Activated CD8-positive, alpha-beta T cell treated with anti-CD3 and anti-CD28 coated beads for 36 hours (primary cell): ENCODE measurements at regions of chr17 and their contacts with region 1.

Region 1: DNA sequence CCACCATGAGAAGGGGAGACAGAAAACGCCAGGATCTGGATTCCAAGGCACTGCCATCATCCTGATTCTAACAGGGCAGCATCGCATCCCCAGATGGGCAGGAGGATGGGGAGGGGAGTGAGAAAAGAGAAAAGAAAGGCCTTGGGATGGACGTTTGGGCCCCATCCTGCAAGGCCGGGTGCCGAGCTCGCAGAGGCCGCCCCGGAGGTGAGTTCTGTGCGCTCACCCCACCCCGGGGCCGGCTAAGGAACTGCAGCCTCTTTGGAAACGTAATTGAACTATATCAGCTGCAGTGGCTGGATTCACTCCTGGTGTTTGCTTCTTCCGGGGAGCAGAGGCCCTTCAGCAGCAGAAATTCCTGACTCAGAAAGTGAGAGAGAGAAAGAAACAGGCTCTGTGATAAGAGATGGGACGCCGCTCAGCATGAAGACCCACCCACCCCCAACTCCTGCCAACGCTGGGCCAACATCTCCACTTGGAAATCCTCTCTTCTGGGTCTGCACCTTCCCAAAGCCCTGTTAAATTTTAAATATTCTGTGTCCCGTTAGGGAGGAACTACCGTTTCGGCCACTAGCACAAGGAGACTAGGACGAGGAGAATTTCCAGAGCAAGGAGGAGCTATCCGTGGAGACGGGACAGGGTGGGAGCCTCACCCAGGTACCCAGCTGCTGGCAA is 8.5 kb upstream of the SSTR2 start:
- DNase-seq: peak; percentile 75
- ATAC-seq: peak; percentile 94
- H3K4me3 Mint-ChIP-seq: no peak overlapping the region
- H3K27ac Mint-ChIP-seq: no peak overlapping the region
- H3K4me1 Mint-ChIP-seq: peaks cover 8% of the 10 kb centered on the region
- H3K27me3 Mint-ChIP-seq: peaks cover 11% of the 10 kb centered on the region
- CTCF ChIP-seq: peak; percentile 77

Region 2: DNA sequence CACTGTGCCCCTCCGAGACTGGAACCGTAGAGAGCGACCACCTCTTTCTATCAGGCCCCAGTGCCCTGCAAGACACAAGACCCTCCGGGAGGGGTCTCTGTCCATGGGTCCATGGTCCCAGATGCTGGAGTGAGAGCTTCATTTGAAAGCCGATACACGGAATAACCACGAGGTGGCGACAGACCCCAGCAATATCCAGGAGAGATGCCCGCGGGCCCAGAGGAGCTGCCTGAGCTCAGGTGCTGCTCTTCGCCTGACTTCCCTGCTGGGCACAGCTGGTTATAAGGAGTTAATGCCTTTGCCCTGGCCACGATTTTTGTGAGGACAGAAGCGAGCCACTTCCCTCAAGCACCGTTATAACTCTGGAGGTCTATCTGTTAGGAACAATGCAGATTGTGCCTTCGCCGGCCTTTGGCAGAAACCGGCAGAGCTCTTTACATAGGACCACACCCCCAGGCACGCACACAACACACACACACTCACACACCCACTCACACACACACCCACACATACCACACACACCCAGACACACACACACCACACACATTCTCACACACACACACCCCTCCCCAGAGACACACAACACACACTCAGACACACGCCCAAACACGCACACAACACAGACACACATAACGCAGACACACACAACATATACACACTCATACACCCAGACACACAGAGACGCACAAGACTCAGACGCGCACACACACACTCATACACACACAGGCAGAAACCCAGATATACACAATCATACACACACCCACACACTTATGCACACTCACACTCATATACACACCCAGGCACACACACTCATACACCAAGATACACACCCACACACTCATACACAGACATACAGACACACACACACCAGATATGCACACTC is 599.1 kb before region 1 on chr17:
- CTCF ChIA-PET with region 1: interaction called, 22 read pairs
- POLR2A ChIA-PET with region 1: no interaction called
- intact Hi-C with region 1: loop called (anchors 10 kb)
- DNase-seq: peak; percentile 78
- ATAC-seq: peak; percentile 73
- H3K4me3 Mint-ChIP-seq: no peak overlapping the region
- H3K27ac Mint-ChIP-seq: no peak overlapping the region
- H3K4me1 Mint-ChIP-seq: no peaks in the 10 kb centered on the region
- H3K27me3 Mint-ChIP-seq: peaks cover 2% of the 10 kb centered on the region
- CTCF ChIP-seq: peak; percentile 72

Region 3: GRCh38 chr17:72715906-72716572 is 440.3 kb before region 1 on chr17:
- CTCF ChIA-PET with region 1: interaction called, 11 read pairs
- POLR2A ChIA-PET with region 1: no interaction called
- intact Hi-C with region 1: no loop called
- DNase-seq: no peak
- ATAC-seq: no peak
- H3K4me3 Mint-ChIP-seq: no peak overlapping the region
- H3K27ac Mint-ChIP-seq: no peak overlapping the region
- H3K4me1 Mint-ChIP-seq: peaks cover 21% of the 10 kb centered on the region
- H3K27me3 Mint-ChIP-seq: no peaks in the 10 kb centered on the region
- CTCF ChIP-seq: no peak

Region 4: GRCh38 chr17:73142872-73143381 is 13.4 kb before region 1 on chr17:
- CTCF ChIA-PET with region 1: interaction called, 11 read pairs
- POLR2A ChIA-PET with region 1: no interaction called
- intact Hi-C with region 1: no loop called
- DNase-seq: peak; percentile 35
- ATAC-seq: peak; percentile 73
- H3K4me3 Mint-ChIP-seq: no peak overlapping the region
- H3K27ac Mint-ChIP-seq: peak overlapping the region; percentile 44
- H3K4me1 Mint-ChIP-seq: peaks cover 14% of the 10 kb centered on the region
- H3K27me3 Mint-ChIP-seq: no peaks in the 10 kb centered on the region
- CTCF ChIP-seq: no peak

Region 5: DNA sequence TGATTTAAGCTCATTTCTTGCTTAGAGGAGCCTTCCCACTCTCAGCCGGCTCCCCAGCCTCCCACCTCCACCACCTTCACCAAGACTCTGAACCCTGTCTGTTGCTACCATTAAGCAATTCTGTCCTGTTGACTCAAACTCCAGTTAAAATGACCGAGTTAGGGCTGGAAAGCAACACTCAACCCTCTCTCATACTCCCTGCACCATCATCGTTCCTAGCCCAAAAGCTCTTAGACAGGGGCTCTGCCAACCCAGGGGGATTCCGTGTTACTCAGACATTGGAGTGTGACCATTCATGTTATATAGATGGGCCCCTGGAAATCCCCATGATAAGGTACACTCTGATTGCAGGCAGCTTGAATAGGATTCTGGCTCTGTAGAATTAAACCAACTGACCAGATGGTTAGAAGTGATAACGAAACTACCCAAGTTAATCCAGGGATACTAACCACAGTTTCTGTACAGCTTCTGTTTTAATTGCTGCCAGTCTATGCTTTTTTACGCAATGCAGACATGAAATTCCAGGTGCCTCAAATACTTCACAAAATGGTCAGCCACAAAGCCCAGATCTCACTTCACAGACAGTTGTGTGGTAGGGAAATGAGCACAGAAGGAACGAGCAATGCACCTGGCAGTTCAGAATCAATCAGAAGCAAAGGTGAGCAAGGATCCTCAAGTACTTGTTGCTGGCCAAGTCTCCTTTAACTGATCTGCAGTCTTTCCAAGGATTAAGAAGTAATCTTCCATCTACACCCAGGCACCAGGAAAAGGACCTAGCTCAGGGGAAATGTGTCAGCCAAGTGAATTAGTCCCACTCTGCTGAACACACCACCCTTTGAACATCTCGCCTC is 10.7 kb after region 1 on chr17:
- CTCF ChIA-PET with region 1: interaction called, 16 read pairs
- POLR2A ChIA-PET with region 1: no interaction called
- intact Hi-C with region 1: no loop called
- DNase-seq: peak; percentile 52
- ATAC-seq: peak; percentile 79
- H3K4me3 Mint-ChIP-seq: peak overlapping the region; percentile 29
- H3K27ac Mint-ChIP-seq: no peak overlapping the region
- H3K4me1 Mint-ChIP-seq: peaks cover 26% of the 10 kb centered on the region
- H3K27me3 Mint-ChIP-seq: peaks cover 66% of the 10 kb centered on the region
- CTCF ChIP-seq: no peak